ENCODE measurements at regions of chr17 and their contacts with region 1.

Region 1: GRCh38 chr17:61635913-61636432 is 45.0 kb upstream of the NACA2 start:
- DNase-seq: peak; percentile 69
- H3K4me3 ChIP-seq: no peak overlapping the region
- H3K27ac ChIP-seq: no peak overlapping the region
- H3K4me1 ChIP-seq: no peaks in the 10 kb centered on the region
- H3K27me3 ChIP-seq: peaks cover 2 to 7% of the 10 kb centered on the region in 2 experiments
- CTCF ChIP-seq: peak; percentile 56 to 64
- POLR2A ChIP-seq: no peak

Region 2: DNA sequence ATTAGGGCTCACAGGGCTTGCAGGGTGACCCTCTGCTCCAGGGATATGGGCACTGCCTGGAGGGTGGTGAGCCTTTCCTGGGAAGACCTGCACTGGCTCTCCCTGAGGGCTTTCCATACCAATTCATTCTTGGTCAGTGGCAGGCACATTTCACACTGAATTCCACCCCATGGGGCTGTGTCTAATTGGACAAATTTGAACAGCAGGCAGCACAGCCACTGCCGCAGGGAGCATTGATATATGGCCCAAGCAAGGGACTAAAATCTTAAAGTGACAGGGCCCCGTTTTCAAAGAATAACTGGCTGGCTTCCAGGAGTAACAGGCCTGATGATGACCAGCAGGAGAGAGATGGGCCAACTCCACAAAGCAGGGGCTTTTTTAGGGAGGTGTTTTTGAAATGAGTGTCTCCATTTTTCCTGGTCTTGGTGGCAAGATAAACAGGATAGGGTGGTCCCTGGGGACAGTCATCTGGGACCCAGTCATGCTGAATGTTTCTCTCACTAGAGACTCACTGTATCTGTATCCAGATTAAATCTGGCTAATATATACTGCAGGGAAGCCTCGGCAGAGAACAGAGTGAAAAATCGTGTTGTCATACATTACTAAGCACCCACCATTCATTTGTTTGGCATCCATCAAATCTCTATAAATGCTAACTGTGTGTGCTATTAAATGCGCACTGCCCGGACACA is 310.4 kb before region 1 on chr17:
- CTCF ChIA-PET with region 1: no interaction called
- POLR2A ChIA-PET with region 1: no interaction called
- dilution Hi-C with region 1: no loop called
- intact Hi-C with region 1: no loop called
- DNase-seq: no peak
- H3K4me3 ChIP-seq: no peak overlapping the region
- H3K27ac ChIP-seq: no peak overlapping the region
- H3K4me1 ChIP-seq: no peaks in the 10 kb centered on the region
- H3K27me3 ChIP-seq: no peaks in the 10 kb centered on the region
- CTCF ChIP-seq: no peak
- POLR2A ChIP-seq: no peak

Region 3: DNA sequence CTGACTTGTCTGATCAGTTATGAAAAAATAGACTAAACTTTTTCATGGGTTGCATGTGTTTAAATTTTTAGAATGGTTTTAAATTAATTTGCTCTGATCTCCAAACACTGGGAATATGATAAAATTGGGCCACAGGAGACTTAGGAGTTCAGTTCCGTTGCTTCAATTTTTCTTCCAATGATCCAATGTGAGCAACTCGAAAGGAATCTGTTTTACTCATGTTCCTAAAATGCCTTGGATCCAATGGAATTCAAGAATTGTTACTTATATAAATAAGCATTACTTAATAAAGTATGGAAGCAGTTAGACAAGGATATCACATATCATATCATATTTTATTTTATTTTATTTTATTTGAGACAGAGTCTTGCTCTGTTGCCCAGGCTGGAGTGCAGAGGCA is 11.1 kb after region 1 on chr17:
- CTCF ChIA-PET with region 1: interaction called, 14 read pairs
- POLR2A ChIA-PET with region 1: no interaction called
- dilution Hi-C with region 1: no loop called
- intact Hi-C with region 1: no loop called
- DNase-seq: no peak
- H3K4me3 ChIP-seq: no peak overlapping the region
- H3K27ac ChIP-seq: no peak overlapping the region
- H3K4me1 ChIP-seq: no peaks in the 10 kb centered on the region
- H3K27me3 ChIP-seq: no peaks in the 10 kb centered on the region
- CTCF ChIP-seq: no peak
- POLR2A ChIP-seq: no peak

Region 4: DNA sequence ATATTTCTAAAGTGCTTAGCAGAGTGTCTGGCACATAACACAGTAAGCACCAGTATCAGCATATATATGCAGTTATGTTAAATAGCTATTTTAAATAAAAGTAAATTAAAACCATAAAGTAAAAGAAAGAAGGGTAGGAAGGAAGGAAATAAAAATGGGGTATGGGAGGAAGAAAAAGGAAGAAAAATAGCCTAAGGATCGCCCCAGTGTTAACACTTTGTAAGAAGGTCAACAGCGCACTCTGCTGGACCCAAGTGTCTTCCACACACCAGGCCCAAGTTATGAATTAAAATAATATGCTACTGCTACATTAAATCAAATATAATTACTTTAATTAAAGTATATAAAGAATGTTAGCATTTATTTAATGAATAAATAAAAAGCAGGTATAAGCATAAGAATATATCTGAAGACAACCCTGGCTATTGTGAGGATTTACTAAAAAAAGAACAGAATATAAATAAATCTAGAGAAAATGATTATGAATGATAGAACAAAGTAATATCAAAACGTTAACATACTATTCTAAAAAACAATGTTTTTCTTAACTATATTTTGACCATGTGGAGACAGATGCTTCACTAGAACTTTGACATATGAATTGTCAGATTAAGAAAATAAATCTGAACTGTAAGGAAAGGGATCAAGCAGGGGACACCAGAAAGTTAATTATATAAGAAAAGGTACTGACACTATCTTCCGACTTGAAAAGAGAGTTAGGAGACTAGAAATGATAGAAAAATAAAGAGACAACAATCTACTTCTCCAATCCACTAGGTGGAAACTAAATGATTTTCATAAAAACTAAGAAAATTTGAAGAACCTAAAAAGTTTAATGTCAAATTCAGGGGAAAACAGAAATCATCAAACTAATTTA is 201.4 kb after region 1 on chr17:
- CTCF ChIA-PET with region 1: interaction called, 76 read pairs
- POLR2A ChIA-PET with region 1: no interaction called
- dilution Hi-C with region 1: no loop called
- intact Hi-C with region 1: loop called (anchors 1 kb)
- DNase-seq: peak; percentile 76
- H3K4me3 ChIP-seq: no peak overlapping the region
- H3K27ac ChIP-seq: no peak overlapping the region
- H3K4me1 ChIP-seq: peaks cover 4% of the 10 kb centered on the region
- H3K27me3 ChIP-seq: no peaks in the 10 kb centered on the region
- CTCF ChIP-seq: peak; percentile 64 to 65
- POLR2A ChIP-seq: no peak

Region 5: DNA sequence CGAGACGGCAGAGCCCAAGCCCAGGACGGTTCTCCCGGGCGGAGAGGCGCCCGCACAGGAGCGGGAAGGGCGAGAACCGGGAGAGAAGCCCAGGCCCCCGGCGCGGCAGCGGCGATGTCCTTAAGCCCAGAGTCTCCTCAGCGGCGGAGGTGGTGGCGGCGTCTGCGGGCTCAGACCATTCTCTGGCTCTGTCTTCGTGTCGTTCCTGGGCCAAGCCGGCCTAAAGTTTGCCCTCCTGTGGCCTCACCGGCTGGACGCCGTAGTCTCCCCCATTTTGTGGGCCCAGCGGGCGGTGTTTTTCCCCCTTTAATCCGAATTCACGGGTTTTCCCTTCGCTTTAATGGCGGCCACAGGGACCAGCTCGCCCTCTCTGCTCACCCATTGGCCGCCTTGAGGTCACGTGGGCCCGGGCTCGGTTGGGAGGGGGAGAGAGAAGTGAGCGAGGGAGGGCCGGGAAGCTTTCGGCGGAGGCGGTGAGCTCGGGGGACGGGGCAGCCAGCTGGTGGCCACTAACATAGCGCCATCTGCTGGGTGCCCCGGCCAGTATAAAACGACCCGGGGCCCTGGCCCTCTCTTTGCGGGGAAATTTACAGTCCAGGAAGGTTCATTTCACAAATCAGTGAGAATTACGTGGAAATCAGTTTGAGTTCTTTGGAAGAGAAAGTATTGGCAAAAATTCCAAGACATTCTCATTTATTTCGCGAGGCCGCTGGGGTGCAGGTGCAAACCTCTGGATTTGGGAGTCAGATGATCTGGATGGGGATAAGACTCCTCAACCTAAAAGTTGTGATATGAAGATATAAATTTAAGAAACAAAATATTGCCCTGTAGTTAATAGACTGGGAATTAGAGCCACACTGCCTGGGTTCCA is 429.9 kb after region 1 on chr17:
- CTCF ChIA-PET with region 1: interaction called, 13 read pairs
- POLR2A ChIA-PET with region 1: no interaction called
- dilution Hi-C with region 1: no loop called
- intact Hi-C with region 1: loop called (anchors 1 kb)
- DNase-seq: peak; percentile 98
- H3K4me3 ChIP-seq: peak overlapping the region; percentile 68 to 100 (median 95)
- H3K27ac ChIP-seq: peak overlapping the region; percentile 98
- H3K4me1 ChIP-seq: peaks cover 19% of the 10 kb centered on the region
- H3K27me3 ChIP-seq: no peaks in the 10 kb centered on the region
- CTCF ChIP-seq: peak; percentile 93 to 94
- POLR2A ChIP-seq: peak; percentile 95

Region 6: DNA sequence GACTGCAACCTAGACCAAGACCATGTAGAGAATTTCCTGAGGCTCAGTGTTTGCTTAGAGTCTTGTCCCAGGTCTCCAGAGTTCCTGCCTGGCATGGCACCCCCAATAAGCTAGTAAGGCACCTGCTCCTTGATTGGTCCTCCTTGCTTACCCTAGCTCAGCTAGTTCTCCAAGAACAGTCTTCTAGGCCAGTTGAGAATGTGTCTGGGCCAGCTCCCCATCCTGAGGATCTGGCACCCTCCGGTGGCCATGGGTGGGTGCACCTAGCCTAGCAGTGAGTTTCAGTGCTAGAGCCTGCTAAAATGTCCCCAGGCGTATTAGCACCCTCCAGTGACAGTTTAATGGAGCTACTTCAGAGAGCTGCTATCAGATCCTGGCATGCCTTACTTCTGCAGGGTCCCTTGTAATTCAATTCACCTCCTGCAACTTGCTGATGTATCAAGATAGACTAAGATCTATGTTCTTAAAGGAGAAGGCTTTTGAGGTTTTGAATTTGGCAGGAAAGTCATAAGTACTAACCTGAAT is 473.5 kb after region 1 on chr17:
- CTCF ChIA-PET with region 1: interaction called, 11 read pairs
- POLR2A ChIA-PET with region 1: no interaction called
- dilution Hi-C with region 1: no loop called
- intact Hi-C with region 1: loop called (anchors 5 kb)
- DNase-seq: peak; percentile 36
- H3K4me3 ChIP-seq: no peak overlapping the region
- H3K27ac ChIP-seq: no peak overlapping the region
- H3K4me1 ChIP-seq: no peaks in the 10 kb centered on the region
- H3K27me3 ChIP-seq: peaks cover 2 to 4% of the 10 kb centered on the region in 2 experiments
- CTCF ChIP-seq: peak; percentile 45 to 46
- POLR2A ChIP-seq: no peak

Region 7: GRCh38 chr17:62179534-62180151 is 543.7 kb after region 1 on chr17:
- CTCF ChIA-PET with region 1: interaction called, 3 read pairs
- POLR2A ChIA-PET with region 1: no interaction called
- dilution Hi-C with region 1: no loop called
- intact Hi-C with region 1: loop called (anchors 2 kb)
- DNase-seq: peak; percentile 80
- H3K4me3 ChIP-seq: no peak overlapping the region
- H3K27ac ChIP-seq: no peak overlapping the region
- H3K4me1 ChIP-seq: peaks cover 17% of the 10 kb centered on the region
- H3K27me3 ChIP-seq: no peaks in the 10 kb centered on the region
- CTCF ChIP-seq: peak; percentile 7 to 19
- POLR2A ChIP-seq: no peak

Region 8: DNA sequence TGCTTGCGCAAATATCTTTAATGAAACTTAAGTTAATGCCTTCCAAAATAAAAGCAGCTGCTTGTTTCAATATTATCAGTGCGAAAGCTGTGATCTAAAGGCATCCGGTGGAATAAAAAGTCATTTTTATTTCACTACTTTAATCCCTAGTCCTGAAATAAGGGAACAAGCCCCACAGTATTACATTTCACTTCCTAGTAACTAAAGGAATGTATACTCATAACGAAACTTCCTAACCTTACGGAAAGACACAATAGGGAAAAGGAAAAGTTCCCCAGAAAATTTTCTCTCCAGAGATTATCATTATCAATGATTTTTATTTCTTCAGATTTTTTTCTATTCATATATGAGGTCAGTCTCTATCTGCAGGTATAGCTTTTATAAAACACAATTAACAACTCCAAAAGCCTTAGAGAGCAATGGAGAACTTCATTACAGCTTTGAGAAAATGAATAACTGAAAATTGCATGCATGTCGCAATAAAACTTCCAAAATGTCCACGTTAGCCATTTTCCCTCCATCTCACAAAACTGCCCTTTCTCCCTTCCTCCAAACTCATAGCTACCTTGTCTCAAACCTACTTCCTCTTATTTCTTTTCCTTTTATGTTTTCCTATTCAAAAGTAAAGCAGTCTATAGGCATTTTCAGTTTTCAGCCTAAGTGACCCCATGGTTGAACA is 583.4 kb after region 1 on chr17:
- CTCF ChIA-PET with region 1: no interaction called
- POLR2A ChIA-PET with region 1: no interaction called
- dilution Hi-C with region 1: no loop called
- intact Hi-C with region 1: loop called (anchors 10 kb)
- DNase-seq: no peak
- H3K4me3 ChIP-seq: no peak overlapping the region
- H3K27ac ChIP-seq: no peak overlapping the region
- H3K4me1 ChIP-seq: no peaks in the 10 kb centered on the region
- H3K27me3 ChIP-seq: no peaks in the 10 kb centered on the region
- CTCF ChIP-seq: no peak
- POLR2A ChIP-seq: no peak